ENCODE measurements at regions of chr6 and their contacts with region 1.

Region 1: GRCh38 chr6:37207903-37208456 is 38.0 kb downstream of the PIM1 start:
- DNase-seq: peak; percentile 44 to 72
- ATAC-seq: peak in 1 of 2 donors; percentile 63
- H3K4me3 ChIP-seq: no peak overlapping the region
- H3K27ac ChIP-seq: no peak overlapping the region
- H3K4me1 ChIP-seq: peaks cover 0 to 7% of the 10 kb centered on the region in 2 donors
- H3K27me3 ChIP-seq: no peaks in the 10 kb centered on the region
- CTCF ChIP-seq: peak; percentile 50 to 79 (median 69)
- POLR2A ChIP-seq: no peak

Region 2: GRCh38 chr6:36897609-36898008 is 310.4 kb before region 1 on chr6:
- in situ Hi-C with region 1: loop called in 3 of 4 experiments (anchors 10 to 25 kb)
- intact Hi-C with region 1: no loop called
- DNase-seq: no peak
- ATAC-seq: no peak
- H3K4me3 ChIP-seq: no peak overlapping the region
- H3K27ac ChIP-seq: no peak overlapping the region
- H3K4me1 ChIP-seq: peaks cover 0 to 4% of the 10 kb centered on the region in 2 donors
- H3K27me3 ChIP-seq: no peaks in the 10 kb centered on the region
- CTCF ChIP-seq: no peak
- POLR2A ChIP-seq: no peak

Region 3: DNA sequence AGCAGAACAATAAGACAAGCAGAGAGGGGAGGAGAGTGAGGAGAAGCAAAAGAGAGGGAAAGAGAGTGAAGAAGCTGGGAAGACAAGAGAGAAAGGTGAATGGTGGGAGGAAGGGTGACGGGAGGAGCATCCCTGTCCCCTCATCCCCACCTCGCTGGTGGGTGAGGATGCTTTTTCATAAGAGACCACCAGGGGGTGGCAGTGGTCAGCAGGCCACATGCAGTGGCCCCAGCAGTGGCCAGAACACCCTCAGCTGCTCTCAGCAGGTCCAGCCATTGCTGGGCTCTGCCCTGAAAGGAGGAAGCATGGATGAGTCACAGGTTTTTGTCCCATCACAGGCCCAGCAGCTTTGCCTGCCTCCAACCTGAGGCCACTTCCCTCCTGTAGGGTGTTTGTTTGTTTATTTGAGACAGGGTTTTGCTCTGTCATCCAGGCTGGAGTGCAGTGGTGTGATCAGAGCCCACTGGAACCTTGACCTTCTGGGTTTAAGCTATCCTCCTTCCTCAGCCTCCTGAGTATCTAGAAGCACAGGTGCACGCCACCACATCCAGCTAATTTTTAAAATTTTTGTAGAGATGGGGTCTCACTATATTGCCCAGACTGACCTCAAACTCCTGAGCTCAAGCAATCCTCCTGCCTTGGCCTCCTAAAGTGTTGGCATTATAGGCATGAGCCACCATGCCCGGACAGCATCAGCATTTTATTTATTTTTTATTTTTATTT is 178.6 kb before region 1 on chr6:
- in situ Hi-C with region 1: loop called in 1 of 4 experiments (anchors 10 kb)
- intact Hi-C with region 1: loop called (anchors 1 kb)
- DNase-seq: peak; percentile 41 to 69
- ATAC-seq: peak; percentile 77 to 82
- H3K4me3 ChIP-seq: no peak overlapping the region
- H3K27ac ChIP-seq: no peak overlapping the region
- H3K4me1 ChIP-seq: no peaks in the 10 kb centered on the region
- H3K27me3 ChIP-seq: no peaks in the 10 kb centered on the region
- CTCF ChIP-seq: peak in 4 of 5 experiments; percentile 63 to 82 (median 76)
- POLR2A ChIP-seq: no peak

Region 4: GRCh38 chr6:37169496-37170272 is 38.3 kb before region 1 on chr6 and contains the start of gene PIM1:
- in situ Hi-C with region 1: no loop called
- intact Hi-C with region 1: loop called (anchors 2 kb)
- DNase-seq: peak; percentile 98 to 99
- ATAC-seq: peak; percentile 68 to 70
- H3K4me3 ChIP-seq: peak within 1 kb of the TSS; percentile 69 to 97 (median 90)
- H3K27ac ChIP-seq: peak within 1 kb of the TSS; percentile 92 to 95 (median 93)
- H3K4me1 ChIP-seq: peaks cover 13 to 27% of the 10 kb centered on the region in 2 donors
- H3K27me3 ChIP-seq: no peaks in the 10 kb centered on the region
- CTCF ChIP-seq: no peak
- POLR2A ChIP-seq: peak; percentile 96
- total RNA-seq, gene PIM1: 5.0 to 23.0 (median 13.0) TPM

Region 5: GRCh38 chr6:37353761-37354525 is 146.0 kb after region 1 on chr6 and contains the start of gene RNF8:
- in situ Hi-C with region 1: no loop called
- intact Hi-C with region 1: no loop called
- DNase-seq: peak; percentile 73 to 83
- ATAC-seq: peak; percentile 89 to 91
- H3K4me3 ChIP-seq: peak within 1 kb of the TSS; percentile 92 to 99 (median 93)
- H3K27ac ChIP-seq: peak within 1 kb of the TSS; percentile 8 to 64 (median 48)
- H3K4me1 ChIP-seq: peaks cover 19 to 22% of the 10 kb centered on the region in 2 donors
- H3K27me3 ChIP-seq: no peaks in the 10 kb centered on the region
- CTCF ChIP-seq: no peak
- POLR2A ChIP-seq: no peak
- total RNA-seq, gene RNF8: 6.9 to 17.8 (median 11.9) TPM